ENCODE measurements at regions of chr1 and their contacts with region 1.

Region 1: GRCh38 chr1:24150234-24151174 is 7.6 kb upstream of the IL22RA1 start:
- DNase-seq: peak; percentile 76
- ATAC-seq: peak; percentile 90
- H3K4me3 ChIP-seq: peak overlapping the region; percentile 20 to 56 (median 35)
- H3K27ac ChIP-seq: peak overlapping the region; percentile 10
- H3K4me1 ChIP-seq: peaks cover 37% of the 10 kb centered on the region
- H3K27me3 ChIP-seq: peaks cover 0 to 10% of the 10 kb centered on the region in 2 experiments; a peak in 2 of 5 replicates
- CTCF ChIP-seq: peak; percentile 96
- EP300 ChIP-seq: no peak
- POLR2A ChIP-seq: no peak
- RAD21 ChIP-seq: peak; percentile 63

Region 2: DNA sequence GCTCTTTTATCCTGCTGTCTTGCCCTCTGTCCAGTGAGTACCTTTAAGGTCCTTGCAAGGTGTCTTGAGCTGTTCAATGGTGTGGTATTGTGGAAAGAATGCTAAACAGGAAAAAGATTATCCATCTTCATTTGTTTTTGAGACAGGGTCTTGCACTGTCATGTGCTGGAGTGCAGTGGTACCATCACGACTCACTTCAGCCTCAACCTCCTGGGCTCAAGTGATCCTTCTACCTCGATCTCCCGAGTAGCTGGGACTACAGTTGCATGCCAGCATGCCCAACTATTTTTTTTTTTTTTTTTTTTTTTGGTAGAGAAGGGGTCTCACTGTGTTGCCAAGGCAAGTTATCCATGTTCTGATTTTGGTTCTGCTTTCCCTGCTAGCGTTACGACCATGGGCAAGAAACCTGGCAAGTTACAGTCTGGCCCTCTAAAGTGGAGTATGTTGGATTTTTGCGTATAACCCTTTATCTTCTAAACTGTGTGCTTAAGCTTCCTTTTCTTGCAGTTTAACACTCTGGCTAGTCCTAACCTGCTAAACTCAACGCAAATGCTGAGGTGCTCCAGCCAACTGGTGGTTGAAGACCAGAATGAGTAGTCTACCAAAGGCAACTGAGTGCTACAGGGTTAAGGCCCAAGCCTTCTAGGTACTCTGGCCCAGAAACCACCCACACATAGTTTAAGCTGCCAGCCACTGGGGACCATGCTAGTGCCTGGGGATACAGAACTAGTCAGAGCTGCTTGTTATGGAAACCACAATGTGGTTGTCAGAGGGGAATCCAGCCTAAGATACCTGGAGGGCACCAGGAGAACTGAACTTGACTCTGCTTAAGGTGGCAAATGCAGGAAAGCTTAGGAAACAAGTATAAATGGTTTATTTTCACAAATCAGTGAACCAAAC is 451.0 kb before region 1 on chr1:
- CTCF ChIA-PET with region 1: no interaction called
- POLR2A ChIA-PET with region 1: no interaction called
- in situ Hi-C with region 1: no loop called
- intact Hi-C with region 1: no loop called
- DNase-seq: no peak
- ATAC-seq: peak; percentile 17; the same call in 1 of the 3 replicates
- H3K4me3 ChIP-seq: no peak overlapping the region
- H3K27ac ChIP-seq: no peak overlapping the region
- H3K4me1 ChIP-seq: peaks cover 49% of the 10 kb centered on the region
- H3K27me3 ChIP-seq: no peaks in the 10 kb centered on the region
- CTCF ChIP-seq: no peak
- EP300 ChIP-seq: no peak
- POLR2A ChIP-seq: no peak; a peak in 1 of 4 replicates
- RAD21 ChIP-seq: no peak

Region 3: GRCh38 chr1:23979878-23980724 is 170.4 kb before region 1 on chr1 and contains the start of gene SRSF10:
- CTCF ChIA-PET with region 1: no interaction called
- POLR2A ChIA-PET with region 1: no interaction called
- in situ Hi-C with region 1: no loop called
- intact Hi-C with region 1: no loop called
- DNase-seq: peak; percentile 95
- ATAC-seq: peak; percentile 96
- H3K4me3 ChIP-seq: peak within 1 kb of the TSS; percentile 91 to 96 (median 93)
- H3K27ac ChIP-seq: peak within 1 kb of the TSS; percentile 98
- H3K4me1 ChIP-seq: peaks cover 56% of the 10 kb centered on the region
- H3K27me3 ChIP-seq: no peaks in the 10 kb centered on the region; a peak in 1 of 5 replicates
- CTCF ChIP-seq: peak; percentile 76
- EP300 ChIP-seq: peak in 1 of 2 experiments; percentile 62; a peak in 2 of 4 replicates
- POLR2A ChIP-seq: peak; percentile 98
- RAD21 ChIP-seq: peak; percentile 73
- total RNA-seq, gene SRSF10: 156 and 186 TPM in 2 replicates

Region 4: DNA sequence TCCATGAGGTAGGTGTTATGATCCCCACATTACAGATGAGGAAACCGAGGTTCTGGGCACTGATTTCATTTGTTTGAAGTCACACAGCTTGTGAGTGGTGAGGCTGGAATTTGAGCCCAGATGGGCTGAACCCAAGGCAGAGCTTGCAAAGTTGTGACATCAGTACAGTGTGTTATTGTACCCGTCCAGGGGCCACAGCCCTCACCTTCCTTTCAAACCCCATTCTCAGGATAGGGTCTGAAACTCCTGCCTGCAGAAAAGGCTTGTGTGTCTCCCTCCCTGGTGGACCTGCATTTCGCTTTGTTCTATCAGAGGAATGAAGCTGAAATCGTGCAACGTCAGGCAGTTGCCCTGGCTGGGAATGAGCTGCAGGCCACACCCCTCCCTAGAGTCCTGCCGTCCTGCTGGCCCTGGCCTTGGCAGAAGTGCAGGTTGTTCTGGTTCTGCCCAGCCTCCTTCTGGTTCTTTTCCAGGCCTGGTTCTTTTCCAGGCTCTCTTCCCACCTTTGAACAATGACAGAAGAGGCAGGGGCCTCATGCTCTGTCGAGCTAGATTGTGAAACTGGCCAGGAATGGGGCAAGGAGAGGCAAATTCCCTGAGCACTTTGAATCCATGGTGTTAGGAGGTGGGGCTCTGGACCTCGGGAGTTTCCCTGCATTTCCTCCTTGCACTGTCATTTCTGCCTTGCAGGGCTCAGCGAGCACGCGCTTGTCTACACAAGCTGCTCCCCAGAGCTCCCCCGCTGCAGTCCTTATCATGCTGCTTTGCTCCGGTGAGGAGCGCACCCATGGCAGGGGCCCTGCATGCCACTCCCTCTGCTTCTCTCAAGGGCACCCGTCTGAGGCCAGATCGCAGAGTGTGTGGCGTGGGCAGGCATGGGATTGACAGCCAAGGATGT is 30.4 kb before region 1 on chr1:
- CTCF ChIA-PET with region 1: no interaction called
- POLR2A ChIA-PET with region 1: interaction called, 19 read pairs
- in situ Hi-C with region 1: no loop called
- intact Hi-C with region 1: no loop called
- DNase-seq: peak; percentile 85
- ATAC-seq: peak; percentile 77
- H3K4me3 ChIP-seq: peak overlapping the region in 2 of 3 experiments; percentile 0 to 36; a peak in 3 of 6 replicates
- H3K27ac ChIP-seq: peak overlapping the region; percentile 79
- H3K4me1 ChIP-seq: peaks cover 64% of the 10 kb centered on the region
- H3K27me3 ChIP-seq: no peaks in the 10 kb centered on the region
- CTCF ChIP-seq: no peak
- EP300 ChIP-seq: peak in 1 of 2 experiments; percentile 41; a peak in 1 of 4 replicates
- POLR2A ChIP-seq: peak; percentile 36 to 59; a peak in 3 of 4 replicates
- RAD21 ChIP-seq: no peak

Region 5: GRCh38 chr1:24186993-24187805 is 36.7 kb after region 1 on chr1 and contains the start of gene IFNLR1:
- CTCF ChIA-PET with region 1: no interaction called
- POLR2A ChIA-PET with region 1: interaction called, 7 read pairs
- in situ Hi-C with region 1: no loop called
- intact Hi-C with region 1: loop called (anchors 5 kb)
- DNase-seq: peak; percentile 62
- ATAC-seq: peak; percentile 86
- H3K4me3 ChIP-seq: peak within 1 kb of the TSS; percentile 68 to 82 (median 78)
- H3K27ac ChIP-seq: peak within 1 kb of the TSS; percentile 78
- H3K4me1 ChIP-seq: peaks cover 86% of the 10 kb centered on the region
- H3K27me3 ChIP-seq: no peaks in the 10 kb centered on the region
- CTCF ChIP-seq: no peak
- EP300 ChIP-seq: no peak
- POLR2A ChIP-seq: peak; percentile 13 to 72; a peak in 2 of 4 replicates
- RAD21 ChIP-seq: no peak
- total RNA-seq, gene IFNLR1: 5.7 and 8.5 TPM in 2 replicates

Region 6: DNA sequence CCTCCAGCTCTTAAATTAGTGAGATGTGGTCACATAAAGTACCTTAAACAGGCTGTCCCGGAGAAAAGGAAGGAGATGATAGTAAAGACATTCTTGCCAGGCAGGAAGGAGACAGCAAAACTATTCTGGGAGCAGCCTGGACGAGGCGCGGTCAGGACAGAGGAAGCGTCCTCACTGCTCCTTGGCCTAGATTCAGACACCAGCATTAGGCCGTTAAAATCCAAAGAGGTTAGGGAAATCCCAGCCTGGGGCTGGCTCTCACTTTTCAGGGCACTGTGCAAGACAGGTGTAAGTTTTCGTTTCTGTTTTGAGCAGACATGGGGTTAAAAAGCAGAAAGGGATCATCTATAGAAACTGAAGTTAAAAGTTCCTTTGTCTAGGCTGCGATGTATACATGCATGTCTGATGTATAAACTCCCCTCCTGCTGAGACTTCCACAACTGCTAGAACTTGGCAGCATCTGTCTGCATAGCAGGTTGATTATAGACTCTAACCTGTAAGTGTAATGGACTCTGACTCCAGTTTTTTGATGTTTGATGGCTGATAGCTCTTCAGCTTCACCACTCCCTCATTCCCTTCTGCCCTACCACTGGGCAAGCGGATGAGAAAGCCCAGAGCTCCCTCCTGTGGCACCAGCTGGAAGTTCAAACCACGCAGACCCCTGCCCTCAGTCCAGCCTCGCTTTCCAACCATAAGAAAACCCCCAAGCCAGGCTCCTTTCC is 241.5 kb after region 1 on chr1:
- CTCF ChIA-PET with region 1: interaction called, 27 read pairs
- POLR2A ChIA-PET with region 1: no interaction called
- in situ Hi-C with region 1: no loop called
- intact Hi-C with region 1: loop called (anchors 1 kb)
- DNase-seq: peak; percentile 47
- ATAC-seq: peak; percentile 92
- H3K4me3 ChIP-seq: no peak overlapping the region
- H3K27ac ChIP-seq: no peak overlapping the region
- H3K4me1 ChIP-seq: peaks cover 23% of the 10 kb centered on the region
- H3K27me3 ChIP-seq: no peaks in the 10 kb centered on the region
- CTCF ChIP-seq: peak; percentile 90
- EP300 ChIP-seq: no peak
- POLR2A ChIP-seq: no peak
- RAD21 ChIP-seq: peak; percentile 65